Activated CD8-positive, alpha-beta memory T cell treated with anti-CD3 and anti-CD28 coated beads, Interleukin-2, amount 10 ng/mL, durations not matched to agents 7 days and 5 days (primary cell): ENCODE measurements at regions of chr15 and their contacts with region 1.

Region 1: GRCh38 chr15:66386204-66387123 is at the start of gene MAP2K1:
- DNase-seq: peak; percentile 99
- ATAC-seq: peak; percentile 87
- H3K4me3 Mint-ChIP-seq: peak within 1 kb of the TSS; percentile 97
- H3K27ac Mint-ChIP-seq: peak within 1 kb of the TSS; percentile 99
- H3K4me1 Mint-ChIP-seq: peaks cover 45% of the 10 kb centered on the region
- H3K27me3 Mint-ChIP-seq: no peaks in the 10 kb centered on the region
- total RNA-seq, gene MAP2K1: 83.3 to 83.5 TPM

Region 2: GRCh38 chr15:66356345-66357236 is 29.9 kb before region 1 on chr15 and contains the start of gene TIPIN:
- CTCF ChIA-PET with region 1: interaction called, 36 read pairs
- DNase-seq: peak; percentile 99
- ATAC-seq: peak; percentile 97
- H3K4me3 Mint-ChIP-seq: peak within 1 kb of the TSS; percentile 93
- H3K27ac Mint-ChIP-seq: peak within 1 kb of the TSS; percentile 97
- H3K4me1 Mint-ChIP-seq: peaks cover 30% of the 10 kb centered on the region
- H3K27me3 Mint-ChIP-seq: no peaks in the 10 kb centered on the region
- total RNA-seq, gene TIPIN: 34.3 to 40.2 TPM

Region 3: GRCh38 chr15:66369773-66370651 is 16.5 kb before region 1 on chr15:
- CTCF ChIA-PET with region 1: interaction called, 15 read pairs
- DNase-seq: peak; percentile 66
- ATAC-seq: peak; percentile 83
- H3K4me3 Mint-ChIP-seq: peak overlapping the region; percentile 53
- H3K27ac Mint-ChIP-seq: peak overlapping the region; percentile 83
- H3K4me1 Mint-ChIP-seq: peaks cover 19% of the 10 kb centered on the region
- H3K27me3 Mint-ChIP-seq: no peaks in the 10 kb centered on the region

Region 4: DNA sequence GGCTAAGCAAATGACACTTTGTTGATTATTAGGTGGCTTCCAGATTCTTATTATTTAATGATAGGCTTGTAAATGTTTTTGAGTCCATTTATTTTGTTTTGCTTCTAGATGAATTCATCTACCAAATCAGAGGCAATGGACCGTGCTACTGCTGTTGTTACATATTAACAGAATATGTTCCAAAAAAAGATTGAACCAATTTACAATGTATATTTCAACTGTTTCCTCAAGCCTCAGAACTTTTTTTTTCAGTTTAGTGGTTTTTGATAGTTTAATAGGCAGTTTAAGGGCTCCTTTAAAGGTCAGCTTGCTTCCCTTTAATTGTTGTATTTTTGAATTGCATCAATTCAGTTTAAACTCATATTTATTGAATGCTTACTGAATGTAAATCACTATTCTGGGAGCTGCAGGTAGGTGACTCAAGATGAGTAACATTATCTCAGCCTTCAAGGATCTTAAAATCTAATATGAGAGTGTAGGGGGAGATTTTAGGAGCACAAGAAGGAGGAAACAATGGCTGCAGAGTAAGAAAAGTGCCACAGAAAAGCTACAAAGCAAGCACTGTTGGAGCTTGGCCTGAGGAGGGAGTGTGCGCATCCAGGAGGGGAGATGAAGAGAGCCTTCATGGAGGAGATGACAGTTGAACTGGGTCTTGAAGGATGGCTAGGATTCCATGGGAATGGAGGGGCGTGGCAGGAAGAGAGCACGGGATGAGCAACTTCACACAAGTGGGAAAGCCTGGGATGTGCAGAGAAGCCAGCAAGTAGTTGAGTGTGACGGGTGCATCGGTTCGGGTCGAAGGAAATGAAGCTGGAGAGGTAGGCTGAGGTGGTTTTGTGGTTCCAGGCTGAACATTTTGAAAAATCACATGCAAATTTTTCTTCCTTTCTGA is 14.9 kb after region 1 on chr15:
- CTCF ChIA-PET with region 1: interaction called, 12 read pairs
- DNase-seq: peak; percentile 57
- ATAC-seq: peak; percentile 81
- H3K4me3 Mint-ChIP-seq: peak overlapping the region; percentile 51
- H3K27ac Mint-ChIP-seq: peak overlapping the region; percentile 68
- H3K4me1 Mint-ChIP-seq: peaks cover 58% of the 10 kb centered on the region
- H3K27me3 Mint-ChIP-seq: no peaks in the 10 kb centered on the region

Region 5: DNA sequence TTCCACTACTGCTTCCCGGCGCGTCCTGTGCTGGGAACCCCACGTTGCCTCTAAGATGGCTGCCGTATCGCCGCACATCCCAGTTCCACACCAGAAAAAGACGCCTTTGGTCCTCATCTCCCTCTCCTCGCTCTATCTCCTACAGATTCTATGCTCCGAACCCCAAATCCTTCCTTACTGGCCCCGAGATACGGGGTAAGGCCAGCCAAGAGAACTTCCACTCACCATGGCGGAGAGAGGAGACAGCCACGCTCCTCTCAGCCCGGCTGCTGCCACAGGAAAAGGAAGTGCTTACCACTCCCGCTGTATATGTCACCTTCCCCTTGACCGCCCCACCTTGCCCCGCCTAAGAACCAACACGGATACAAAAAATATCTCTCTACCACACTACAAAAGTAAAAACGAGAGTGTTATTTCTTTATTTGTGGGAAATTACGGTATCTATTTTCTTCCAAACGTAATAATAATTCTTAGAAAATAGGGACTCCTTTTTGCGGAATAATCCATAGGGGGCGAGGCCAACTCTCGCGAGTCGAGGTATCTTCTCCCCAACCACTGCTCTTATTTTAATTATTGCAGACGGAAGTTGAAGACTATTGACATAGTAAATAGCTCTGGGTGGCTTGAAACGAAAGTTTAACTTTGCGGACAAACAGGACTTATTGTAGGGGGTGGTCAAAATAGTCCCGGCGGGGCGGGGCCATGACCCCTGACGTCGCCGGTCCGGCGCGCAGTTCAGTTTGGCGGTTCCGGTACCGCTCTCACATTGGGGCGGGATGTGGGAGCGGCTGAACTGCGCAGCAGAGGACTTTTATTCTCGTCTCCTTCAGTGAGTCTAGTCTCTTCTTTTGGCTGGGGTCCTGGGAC is 118.3 kb after region 1 on chr15 and contains the starts of genes RPL4 and ZWILCH:
- CTCF ChIA-PET with region 1: interaction called, 119 read pairs
- DNase-seq: peak; percentile 87
- ATAC-seq: peak; percentile 87
- H3K4me3 Mint-ChIP-seq: peak within 1 kb of the TSS; percentile 94
- H3K27ac Mint-ChIP-seq: peak within 1 kb of the TSS; percentile 97
- H3K4me1 Mint-ChIP-seq: peaks cover 58% of the 10 kb centered on the region
- H3K27me3 Mint-ChIP-seq: no peaks in the 10 kb centered on the region
- total RNA-seq, gene RPL4: 2,060 to 2,722 TPM
- total RNA-seq, gene ZWILCH: 35.6 to 44.6 TPM